Left ventricle myocardium inferior (tissue), 1 donor: ENCODE measurements at regions of chr5 and their contacts with region 1.

Region 1: GRCh38 chr5:134304311-134304710 is 62.7 kb downstream of the CDKL3 start:
- DNase-seq: no peak
- H3K4me3 ChIP-seq: no peak overlapping the region
- H3K27ac ChIP-seq: no peak overlapping the region
- H3K4me1 ChIP-seq: no peaks in the 10 kb centered on the region
- H3K27me3 ChIP-seq: no peaks in the 10 kb centered on the region
- CTCF ChIP-seq: no peak

Region 2: GRCh38 chr5:134586866-134587524 is 282.7 kb after region 1 on chr5:
- intact Hi-C with region 1: loop called (anchors 5 kb)
- DNase-seq: peak; percentile 84
- H3K4me3 ChIP-seq: peak overlapping the region; percentile 30
- H3K27ac ChIP-seq: peak overlapping the region; percentile 1
- H3K4me1 ChIP-seq: peaks cover 32% of the 10 kb centered on the region
- H3K27me3 ChIP-seq: no peaks in the 10 kb centered on the region
- CTCF ChIP-seq: peak; percentile 87